ENCODE measurements at regions of chr12 and their contacts with region 1.

Region 1: GRCh38 chr12:50806176-50806575 is 36.5 kb upstream of the TMPRSS12 start:
- DNase-seq: no peak
- ATAC-seq: peak in 3 of 4 donors; percentile 42 to 57 (median 52)
- H3K4me3 ChIP-seq: no peak overlapping the region
- H3K27ac ChIP-seq: no peak overlapping the region
- H3K4me1 ChIP-seq: no peaks in the 10 kb centered on the region
- H3K27me3 ChIP-seq: no peaks in the 10 kb centered on the region
- CTCF ChIP-seq: no peak

Region 2: GRCh38 chr12:50661300-50662115 is 144.7 kb before region 1 on chr12:
- intact Hi-C with region 1: no loop called
- DNase-seq: no peak
- ATAC-seq: no peak
- H3K4me3 ChIP-seq: no peak overlapping the region
- H3K27ac ChIP-seq: no peak overlapping the region
- H3K4me1 ChIP-seq: no peaks in the 10 kb centered on the region
- H3K27me3 ChIP-seq: no peaks in the 10 kb centered on the region
- CTCF ChIP-seq: no peak

Region 3: DNA sequence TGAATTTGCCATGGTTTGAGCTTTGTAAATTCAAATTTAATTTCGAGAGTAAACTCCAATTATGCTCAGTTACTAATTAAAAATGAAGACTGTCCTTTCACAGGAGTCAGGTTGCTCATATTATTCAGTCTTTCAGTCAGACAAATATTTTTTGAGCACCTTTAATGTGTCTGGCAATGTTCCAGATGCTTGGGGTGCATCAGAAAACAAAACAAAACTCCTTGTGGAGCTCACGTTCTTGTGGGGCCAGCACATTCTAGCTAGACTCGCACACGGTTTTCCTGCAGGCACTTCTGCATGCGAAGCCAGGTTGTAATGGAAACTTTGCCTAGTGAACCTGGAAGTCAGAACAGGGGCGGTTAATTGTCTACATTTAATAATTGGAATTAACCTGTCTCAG is 106.2 kb before region 1 on chr12:
- intact Hi-C with region 1: no loop called
- DNase-seq: no peak
- ATAC-seq: no peak
- H3K4me3 ChIP-seq: no peak overlapping the region
- H3K27ac ChIP-seq: no peak overlapping the region
- H3K4me1 ChIP-seq: no peaks in the 10 kb centered on the region
- H3K27me3 ChIP-seq: no peaks in the 10 kb centered on the region
- CTCF ChIP-seq: no peak

Region 4: DNA sequence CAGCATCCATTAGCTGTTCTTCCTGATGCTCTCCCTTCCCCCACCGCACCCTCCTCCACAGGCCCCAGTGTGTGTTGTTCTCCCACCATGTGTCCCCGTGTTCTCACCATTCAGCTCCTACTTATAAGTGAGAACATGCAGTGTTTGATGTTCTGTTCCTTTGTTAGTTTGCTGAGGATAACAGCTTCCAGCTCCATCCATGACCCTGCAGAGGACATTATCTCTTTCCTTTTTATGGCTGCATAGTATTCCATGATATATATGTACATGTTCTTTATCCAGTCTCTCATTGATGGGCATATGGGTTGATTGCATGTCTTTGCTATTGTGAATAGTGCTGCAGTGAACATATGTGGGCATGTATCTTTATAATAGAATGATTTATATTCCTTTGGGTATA is 33.3 kb before region 1 on chr12:
- intact Hi-C with region 1: loop called in 1 of 2 experiments (anchors 5 kb)
- DNase-seq: no peak
- ATAC-seq: peak in 2 of 4 donors; percentile 4 to 11
- H3K4me3 ChIP-seq: no peak overlapping the region
- H3K27ac ChIP-seq: peak overlapping the region; percentile 66
- H3K4me1 ChIP-seq: peaks cover 20% of the 10 kb centered on the region
- H3K27me3 ChIP-seq: no peaks in the 10 kb centered on the region
- CTCF ChIP-seq: no peak

Region 5: GRCh38 chr12:50862316-50862715 is 56.1 kb after region 1 on chr12:
- intact Hi-C with region 1: no loop called
- DNase-seq: no peak
- ATAC-seq: no peak
- H3K4me3 ChIP-seq: no peak overlapping the region
- H3K27ac ChIP-seq: no peak overlapping the region
- H3K4me1 ChIP-seq: no peaks in the 10 kb centered on the region
- H3K27me3 ChIP-seq: no peaks in the 10 kb centered on the region
- CTCF ChIP-seq: no peak